ENCODE measurements at regions of chr4 and their contacts with region 1.

Region 1: DNA sequence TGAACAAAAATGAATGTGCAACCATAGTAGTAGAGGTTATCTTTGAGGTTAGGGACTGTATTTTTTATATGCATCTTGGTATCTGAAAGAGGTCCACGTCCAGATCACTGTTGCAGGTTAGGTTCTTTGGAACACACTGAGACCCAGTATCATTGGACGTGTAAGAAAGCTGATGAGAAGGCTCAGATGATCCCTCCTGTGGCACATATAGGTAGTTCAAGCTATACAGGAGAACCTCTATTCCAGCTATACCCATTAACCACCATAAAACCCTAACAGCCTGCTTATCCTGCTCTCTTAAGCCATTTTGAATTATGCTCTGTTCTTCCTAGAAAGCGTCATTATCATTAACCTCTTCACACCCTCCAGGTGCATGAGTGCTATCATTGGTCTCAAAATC is 930.7 kb upstream of the HS3ST1 start:
- DNase-seq: no peak
- H3K4me3 ChIP-seq: no peak overlapping the region
- H3K27ac ChIP-seq: no peak overlapping the region
- H3K4me1 ChIP-seq: no peaks in the 10 kb centered on the region
- H3K27me3 ChIP-seq: no peaks in the 10 kb centered on the region
- CTCF ChIP-seq: no peak
- POLR2A ChIP-seq: no peak

Region 2: GRCh38 chr4:11966782-11967181 is 392.6 kb before region 1 on chr4:
- intact Hi-C with region 1: loop called (anchors 5 kb)
- DNase-seq: no peak
- H3K4me3 ChIP-seq: no peak overlapping the region
- H3K27ac ChIP-seq: no peak overlapping the region
- H3K4me1 ChIP-seq: no peaks in the 10 kb centered on the region
- H3K27me3 ChIP-seq: no peaks in the 10 kb centered on the region
- CTCF ChIP-seq: no peak
- POLR2A ChIP-seq: no peak